Naive thymus-derived CD4-positive, alpha-beta T cell (primary cell): ENCODE measurements at regions of chr5 and their contacts with region 1.

Region 1: GRCh38 chr5:65967288-65968066 is 41.1 kb downstream of the ERBIN start:
- DNase-seq: peak in 1 of 9 donors; percentile 11
- ATAC-seq: peak; percentile 22
- H3K4me3 ChIP-seq: no peak overlapping the region
- H3K4me3 Mint-ChIP-seq: peak overlapping the region in 9 of 10 donors; percentile 4 to 74 (median 49)
- H3K27ac ChIP-seq: no peak overlapping the region
- H3K27ac Mint-ChIP-seq: peak overlapping the region in 7 of 9 donors; percentile 19 to 81 (median 68)
- H3K4me1 ChIP-seq: peaks cover 33 to 39% of the 10 kb centered on the region in 2 donors
- H3K4me1 Mint-ChIP-seq: peaks cover 46 to 92% (median 66%) of the 10 kb centered on the region in 7 donors
- H3K27me3 ChIP-seq: no peaks in the 10 kb centered on the region
- H3K27me3 Mint-ChIP-seq: no peaks in the 10 kb centered on the region

Region 2: DNA sequence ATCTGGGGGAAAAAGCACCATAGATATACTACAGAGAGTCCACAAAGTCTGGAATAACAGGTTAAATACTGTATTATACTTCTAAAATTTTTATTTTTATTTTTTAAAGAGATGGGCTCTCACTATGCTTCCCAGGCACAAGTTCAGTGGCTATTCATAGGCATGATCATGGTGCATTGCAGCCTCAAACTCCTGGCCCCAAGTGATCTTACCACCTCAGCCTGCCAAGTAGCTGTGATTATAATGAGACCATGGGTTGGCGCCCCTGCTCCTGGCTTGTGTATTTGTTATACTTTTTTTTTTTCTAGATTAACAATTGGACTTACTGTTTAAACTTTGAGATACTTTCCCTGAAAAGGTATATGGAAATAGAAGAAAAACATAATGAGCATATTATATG is 15.2 kb before region 1 on chr5:
- CTCF ChIA-PET with region 1: no interaction called
- POLR2A ChIA-PET with region 1: interaction called, 4 read pairs
- intact Hi-C with region 1: loop called in 1 of 2 experiments (anchors 2 kb)
- DNase-seq: no peak
- ATAC-seq: no peak
- H3K4me3 ChIP-seq: no peak overlapping the region
- H3K4me3 Mint-ChIP-seq: no peak overlapping the region
- H3K27ac ChIP-seq: no peak overlapping the region
- H3K27ac Mint-ChIP-seq: peak overlapping the region in 3 of 9 donors; percentile 32 to 72 (median 54)
- H3K4me1 ChIP-seq: peaks cover 9 to 29% of the 10 kb centered on the region in 2 donors
- H3K4me1 Mint-ChIP-seq: peaks cover 16 to 81% (median 38%) of the 10 kb centered on the region in 7 donors
- H3K27me3 ChIP-seq: no peaks in the 10 kb centered on the region
- H3K27me3 Mint-ChIP-seq: no peaks in the 10 kb centered on the region

Region 3: GRCh38 chr5:65986050-65986451 is 18.6 kb after region 1 on chr5:
- CTCF ChIA-PET with region 1: interaction called, 3 read pairs
- POLR2A ChIA-PET with region 1: no interaction called
- intact Hi-C with region 1: loop called in 1 of 2 experiments (anchors 2 kb)
- DNase-seq: no peak
- ATAC-seq: no peak
- H3K4me3 ChIP-seq: no peak overlapping the region
- H3K4me3 Mint-ChIP-seq: peak overlapping the region in 5 of 10 donors; percentile 9 to 50 (median 22)
- H3K27ac ChIP-seq: no peak overlapping the region
- H3K27ac Mint-ChIP-seq: peak overlapping the region in 6 of 9 donors; percentile 46 to 84 (median 69)
- H3K4me1 ChIP-seq: peaks cover 4 to 10% of the 10 kb centered on the region in 2 donors
- H3K4me1 Mint-ChIP-seq: peaks cover 18 to 82% (median 52%) of the 10 kb centered on the region in 7 donors
- H3K27me3 ChIP-seq: no peaks in the 10 kb centered on the region
- H3K27me3 Mint-ChIP-seq: no peaks in the 10 kb centered on the region

Region 4: DNA sequence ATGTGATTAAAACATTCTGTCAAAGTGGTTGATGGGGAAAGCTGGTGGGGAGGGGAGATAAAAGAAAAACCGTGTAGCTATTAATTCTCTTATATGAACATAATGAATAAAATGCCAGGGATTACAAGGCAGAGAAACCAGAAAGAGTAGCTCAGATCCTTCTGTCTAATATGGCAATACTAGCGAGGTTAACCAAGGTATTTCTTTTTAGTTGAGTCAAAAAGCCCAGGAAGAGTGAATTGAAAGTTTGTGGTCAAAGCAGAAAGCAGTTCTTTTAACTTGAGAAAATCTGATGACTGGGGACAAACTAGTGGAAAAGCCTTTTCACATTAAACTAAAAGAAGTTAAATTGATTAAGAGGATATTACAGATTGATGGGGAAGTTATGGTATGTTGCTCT is 34.9 kb after region 1 on chr5:
- CTCF ChIA-PET with region 1: no interaction called
- POLR2A ChIA-PET with region 1: no interaction called
- intact Hi-C with region 1: loop called in 1 of 2 experiments (anchors 5 kb)
- DNase-seq: no peak
- ATAC-seq: no peak
- H3K4me3 ChIP-seq: no peak overlapping the region
- H3K4me3 Mint-ChIP-seq: peak overlapping the region in 4 of 10 donors; percentile 0 to 27 (median 15)
- H3K27ac ChIP-seq: no peak overlapping the region
- H3K27ac Mint-ChIP-seq: peak overlapping the region in 3 of 9 donors; percentile 35 to 78 (median 65)
- H3K4me1 ChIP-seq: peaks cover 0 to 13% of the 10 kb centered on the region in 2 donors
- H3K4me1 Mint-ChIP-seq: peaks cover 19 to 74% (median 38%) of the 10 kb centered on the region in 7 donors
- H3K27me3 ChIP-seq: no peaks in the 10 kb centered on the region
- H3K27me3 Mint-ChIP-seq: no peaks in the 10 kb centered on the region

Region 5: GRCh38 chr5:66503203-66503789 is 535.8 kb after region 1 on chr5:
- CTCF ChIA-PET with region 1: no interaction called
- POLR2A ChIA-PET with region 1: no interaction called
- intact Hi-C with region 1: no loop called
- DNase-seq: no peak
- ATAC-seq: no peak
- H3K4me3 ChIP-seq: no peak overlapping the region
- H3K4me3 Mint-ChIP-seq: no peak overlapping the region
- H3K27ac ChIP-seq: no peak overlapping the region
- H3K27ac Mint-ChIP-seq: no peak overlapping the region
- H3K4me1 ChIP-seq: no peaks in the 10 kb centered on the region
- H3K4me1 Mint-ChIP-seq: no peaks in the 10 kb centered on the region
- H3K27me3 ChIP-seq: no peaks in the 10 kb centered on the region
- H3K27me3 Mint-ChIP-seq: peaks cover 0 to 4% (median 0%) of the 10 kb centered on the region in 5 donors